ENCODE measurements at regions of chr6 and their contacts with region 1.

Region 1: GRCh38 chr6:30814136-30815040 is 69.9 kb upstream of the DDR1 start:
- DNase-seq: peak in 1 of 5 donors; percentile 70
- H3K4me3 ChIP-seq: no peak overlapping the region
- H3K4me3 Mint-ChIP-seq: peak overlapping the region in 7 of 8 donors; percentile 29 to 69 (median 56)
- H3K27ac ChIP-seq: no peak overlapping the region
- H3K27ac Mint-ChIP-seq: peak overlapping the region; percentile 7 to 92 (median 75)
- H3K4me1 ChIP-seq: peaks cover 58% of the 10 kb centered on the region
- H3K4me1 Mint-ChIP-seq: peaks cover 50 to 80% (median 65%) of the 10 kb centered on the region in 4 donors
- H3K27me3 ChIP-seq: no peaks in the 10 kb centered on the region
- H3K27me3 Mint-ChIP-seq: no peaks in the 10 kb centered on the region

Region 2: DNA sequence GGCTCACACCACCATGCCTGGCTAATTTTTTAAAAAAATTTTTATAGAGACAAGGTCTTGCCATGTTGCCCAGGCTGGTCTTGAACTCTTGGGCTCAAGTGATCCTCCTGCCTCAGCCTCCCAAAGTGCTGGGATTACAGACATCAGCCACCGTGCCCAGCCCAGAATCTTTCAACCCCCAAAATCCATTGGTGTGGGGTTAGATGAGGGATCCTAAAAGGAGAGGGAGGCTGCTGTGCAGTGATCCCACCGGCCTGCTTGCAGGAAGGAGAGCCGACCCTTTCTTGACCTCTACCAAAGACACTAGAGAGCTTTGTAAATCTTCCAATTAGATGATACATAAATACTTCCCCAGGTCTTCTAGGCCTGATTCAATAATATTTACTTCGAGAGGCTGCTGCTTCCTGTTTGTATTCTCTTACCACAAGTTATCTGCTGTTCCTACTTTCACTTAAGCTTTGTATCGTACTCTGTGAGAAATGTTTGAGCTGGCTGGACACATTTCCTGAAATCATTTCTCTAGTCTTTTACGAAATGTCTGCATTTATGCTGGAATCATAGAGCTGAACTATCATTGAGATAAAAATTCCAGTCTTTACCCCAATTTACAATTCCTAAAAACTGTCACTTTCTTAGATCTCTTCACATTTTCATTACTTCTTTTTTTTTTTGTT is 20.7 kb before region 1 on chr6:
- CTCF ChIA-PET with region 1: interaction called, 6 read pairs
- POLR2A ChIA-PET with region 1: interaction called, 36 read pairs
- intact Hi-C with region 1: no loop called
- DNase-seq: peak in 4 of 5 donors; percentile 51 to 62 (median 55)
- H3K4me3 ChIP-seq: peak overlapping the region in 1 of 2 donors; percentile 11
- H3K4me3 Mint-ChIP-seq: peak overlapping the region; percentile 43 to 79 (median 74)
- H3K27ac ChIP-seq: peak overlapping the region; percentile 40
- H3K27ac Mint-ChIP-seq: peak overlapping the region; percentile 88 to 97 (median 95)
- H3K4me1 ChIP-seq: peaks cover 41% of the 10 kb centered on the region
- H3K4me1 Mint-ChIP-seq: peaks cover 37 to 70% (median 49%) of the 10 kb centered on the region in 4 donors
- H3K27me3 ChIP-seq: no peaks in the 10 kb centered on the region
- H3K27me3 Mint-ChIP-seq: peaks cover 0 to 2% of the 10 kb centered on the region in 2 donors

Region 3: DNA sequence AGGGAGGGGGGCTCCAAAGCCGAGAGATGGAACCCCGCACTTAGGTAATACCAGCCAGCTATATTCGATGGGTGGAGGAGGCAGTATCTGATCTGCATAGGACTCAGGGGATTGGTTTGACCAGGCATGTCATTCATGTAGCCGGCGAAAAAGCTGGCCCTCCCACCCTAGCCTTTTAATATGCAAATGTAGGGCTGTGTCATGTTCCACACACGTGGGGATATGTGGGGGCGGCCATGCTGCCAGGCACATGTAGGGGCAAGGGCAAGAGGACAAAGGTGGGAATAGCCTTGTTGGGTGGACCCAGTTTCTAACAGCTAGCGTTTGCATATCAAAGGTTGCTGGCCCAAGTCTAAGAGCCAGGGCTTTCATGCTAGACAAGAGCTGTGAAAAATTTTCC is 30.8 kb after region 1 on chr6:
- CTCF ChIA-PET with region 1: no interaction called
- POLR2A ChIA-PET with region 1: no interaction called
- intact Hi-C with region 1: no loop called
- DNase-seq: no peak
- H3K4me3 ChIP-seq: no peak overlapping the region
- H3K4me3 Mint-ChIP-seq: no peak overlapping the region
- H3K27ac ChIP-seq: no peak overlapping the region
- H3K27ac Mint-ChIP-seq: no peak overlapping the region
- H3K4me1 ChIP-seq: peaks cover 25% of the 10 kb centered on the region
- H3K4me1 Mint-ChIP-seq: peaks cover 5 to 18% (median 13%) of the 10 kb centered on the region in 4 donors
- H3K27me3 ChIP-seq: no peaks in the 10 kb centered on the region
- H3K27me3 Mint-ChIP-seq: peaks cover 2 to 5% of the 10 kb centered on the region in 2 donors

Region 4: DNA sequence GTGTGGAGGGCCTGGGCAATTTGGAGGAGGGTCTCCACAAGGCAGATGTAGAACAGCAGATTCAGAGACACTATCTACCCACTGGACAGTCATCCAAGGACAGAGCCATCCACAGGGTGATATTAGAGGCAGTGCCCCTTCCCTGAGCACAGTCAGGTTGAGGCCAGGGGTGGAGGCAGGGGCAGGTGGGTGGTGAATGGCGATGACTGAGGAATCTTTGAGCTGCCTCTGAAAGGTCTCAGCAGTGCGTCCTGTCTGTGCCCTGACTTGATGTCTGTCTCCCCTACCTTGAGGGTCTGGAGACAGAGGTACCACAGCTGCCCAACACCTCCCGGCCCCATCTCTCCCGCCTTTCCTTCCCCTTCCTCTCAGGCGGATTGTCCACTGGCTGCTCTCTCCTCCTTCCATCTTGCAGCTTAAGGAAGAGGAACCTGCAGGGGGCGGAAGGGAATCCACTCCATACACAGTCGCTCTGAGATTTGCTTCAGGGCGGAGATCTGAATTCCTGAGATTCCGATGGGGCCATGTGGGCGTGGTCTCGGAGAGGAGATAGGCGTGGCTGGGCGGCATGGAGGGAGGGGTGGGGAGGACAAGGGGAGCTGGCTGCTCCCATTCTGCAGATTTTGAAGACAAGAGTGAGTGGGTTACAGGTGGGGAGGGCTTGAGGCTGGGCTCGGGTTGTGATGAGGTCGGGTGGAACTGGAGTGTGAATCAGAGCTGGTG is 128.1 kb after region 1 on chr6:
- CTCF ChIA-PET with region 1: no interaction called
- POLR2A ChIA-PET with region 1: no interaction called
- intact Hi-C with region 1: no loop called
- DNase-seq: no peak
- H3K4me3 ChIP-seq: no peak overlapping the region
- H3K4me3 Mint-ChIP-seq: no peak overlapping the region
- H3K27ac ChIP-seq: no peak overlapping the region
- H3K27ac Mint-ChIP-seq: no peak overlapping the region
- H3K4me1 ChIP-seq: no peaks in the 10 kb centered on the region
- H3K4me1 Mint-ChIP-seq: peaks cover 0 to 3% (median 0%) of the 10 kb centered on the region in 4 donors
- H3K27me3 ChIP-seq: peaks cover 20% of the 10 kb centered on the region
- H3K27me3 Mint-ChIP-seq: peaks cover 31 to 59% of the 10 kb centered on the region in 2 donors

Region 5: DNA sequence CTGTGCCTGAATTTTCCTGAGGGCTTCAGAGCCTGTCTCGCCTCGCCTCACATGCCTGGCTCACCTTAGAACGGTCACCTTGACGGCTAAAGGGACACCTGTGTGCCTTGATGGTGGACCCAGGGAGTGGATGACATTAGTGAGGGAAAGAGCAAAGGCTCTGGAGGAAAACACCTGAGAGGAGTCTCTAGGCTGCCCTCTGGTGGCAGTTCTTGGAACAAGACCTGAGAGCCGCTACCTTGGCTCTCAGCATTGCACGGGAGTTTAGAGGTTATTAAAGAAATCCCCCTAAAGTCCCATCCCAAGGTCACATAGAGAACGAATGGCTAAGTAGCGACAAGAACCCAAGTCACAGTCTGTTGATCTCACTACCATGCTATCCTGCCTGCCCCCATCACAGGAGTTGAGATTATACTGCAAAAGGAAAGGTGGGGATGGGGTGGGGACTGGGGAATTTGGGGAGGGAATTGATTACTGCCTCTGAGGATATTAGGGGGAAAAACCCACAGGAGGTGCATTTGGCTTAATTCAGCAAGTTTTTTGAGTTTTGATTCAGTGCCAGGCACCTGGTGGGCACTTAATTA is 313.8 kb after region 1 on chr6:
- CTCF ChIA-PET with region 1: no interaction called
- POLR2A ChIA-PET with region 1: no interaction called
- intact Hi-C with region 1: no loop called
- DNase-seq: peak; percentile 57 to 70 (median 62)
- H3K4me3 ChIP-seq: no peak overlapping the region
- H3K4me3 Mint-ChIP-seq: no peak overlapping the region
- H3K27ac ChIP-seq: no peak overlapping the region
- H3K27ac Mint-ChIP-seq: peak overlapping the region in 3 of 7 donors; percentile 7 to 52 (median 24)
- H3K4me1 ChIP-seq: peaks cover 3% of the 10 kb centered on the region
- H3K4me1 Mint-ChIP-seq: peaks cover 2 to 8% (median 7%) of the 10 kb centered on the region in 4 donors
- H3K27me3 ChIP-seq: no peaks in the 10 kb centered on the region
- H3K27me3 Mint-ChIP-seq: peaks cover 3 to 6% of the 10 kb centered on the region in 2 donors